ENCODE measurements at regions of chr11 and their contacts with region 1.

Region 1: DNA sequence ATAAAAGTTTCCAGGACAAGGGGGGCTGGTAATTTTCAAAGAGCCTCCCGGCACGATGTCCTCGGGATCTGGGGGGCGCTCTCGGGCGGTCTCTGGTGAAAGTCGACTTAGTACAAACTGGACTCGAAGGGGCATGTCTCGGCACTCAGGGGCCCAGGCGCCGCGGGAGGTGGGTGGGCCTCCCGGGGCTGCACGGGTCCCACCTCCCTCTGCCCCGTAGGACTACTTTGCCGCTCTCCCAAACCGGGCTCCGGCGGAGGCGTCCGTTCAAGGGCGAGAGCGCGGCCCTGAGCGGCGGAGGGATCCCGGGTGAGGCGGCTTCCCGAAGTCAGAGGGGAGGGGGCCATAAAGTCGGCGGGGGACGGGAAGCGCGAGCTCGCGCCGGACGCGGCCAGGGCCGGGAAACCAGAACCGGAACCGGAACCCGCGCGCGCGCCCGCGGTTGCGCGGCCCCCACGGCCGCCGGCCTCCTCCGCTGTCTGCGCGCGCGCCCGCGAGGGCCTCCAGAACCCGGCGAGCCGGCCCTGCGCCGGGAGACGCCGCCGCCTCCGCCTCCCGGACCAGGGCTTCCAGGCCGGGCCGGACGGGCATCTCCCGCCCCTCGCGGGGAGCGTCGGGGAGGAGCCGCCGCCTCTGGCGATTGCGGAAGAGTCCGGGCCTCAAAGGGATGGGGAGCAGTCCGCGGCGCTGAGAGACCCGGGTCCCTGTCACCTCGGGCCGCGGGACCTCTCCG is at the start of gene ARHGEF12:
- DNase-seq: peak; percentile 90
- H3K4me3 ChIP-seq: peak within 1 kb of the TSS; percentile 61
- CTCF ChIP-seq: peak; percentile 43

Region 2: GRCh38 chr11:120147092-120147949 is 188.8 kb before region 1 on chr11:
- CTCF ChIA-PET with region 1: no interaction called
- POLR2A ChIA-PET with region 1: no interaction called
- DNase-seq: no peak
- H3K4me3 ChIP-seq: no peak overlapping the region
- CTCF ChIP-seq: no peak

Region 3: GRCh38 chr11:120346233-120346632 is 10.2 kb after region 1 on chr11:
- CTCF ChIA-PET with region 1: interaction called, 15 read pairs
- POLR2A ChIA-PET with region 1: interaction called, 3 read pairs
- DNase-seq: no peak
- H3K4me3 ChIP-seq: no peak overlapping the region
- CTCF ChIP-seq: no peak

Region 4: DNA sequence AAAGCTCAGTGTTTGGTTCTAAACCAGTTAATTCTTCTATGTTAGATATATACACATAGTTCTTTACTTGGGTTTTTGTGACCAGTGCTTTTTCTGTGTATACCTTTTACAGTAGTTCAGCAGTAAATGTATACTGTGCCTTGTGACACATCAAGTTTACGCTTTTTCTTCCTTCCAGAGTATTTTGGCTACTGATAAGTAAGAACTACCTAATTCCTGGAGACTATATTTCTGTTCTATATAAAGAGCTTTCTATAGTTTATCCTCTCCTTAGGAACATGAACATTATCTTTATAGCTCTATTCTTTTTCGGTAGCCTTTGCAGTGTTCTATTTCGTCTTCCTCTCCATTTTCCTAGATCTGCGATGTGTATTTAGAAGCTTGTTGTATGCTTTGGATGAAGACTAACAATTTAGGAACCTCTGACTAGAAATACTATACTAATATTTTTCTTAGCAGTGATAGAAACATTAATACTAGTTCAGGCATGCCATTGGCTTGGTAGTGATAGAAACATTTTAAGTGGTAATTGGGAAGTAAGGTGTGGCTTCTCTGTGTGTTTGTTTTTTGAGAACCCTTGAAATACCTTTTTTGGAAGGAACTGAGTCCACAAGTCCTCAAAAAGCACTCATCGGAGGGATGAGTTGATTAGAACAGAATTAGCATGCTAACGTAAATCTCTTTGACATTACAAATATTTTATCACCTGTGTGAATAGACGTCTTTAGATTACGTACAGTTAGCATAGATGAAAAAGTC is 74.7 kb after region 1 on chr11:
- CTCF ChIA-PET with region 1: interaction called, 16 read pairs
- POLR2A ChIA-PET with region 1: interaction called, 4 read pairs
- DNase-seq: no peak
- H3K4me3 ChIP-seq: no peak overlapping the region
- CTCF ChIP-seq: no peak

Region 5: GRCh38 chr11:120446802-120447201 is 110.7 kb after region 1 on chr11:
- CTCF ChIA-PET with region 1: interaction called, 12 read pairs
- POLR2A ChIA-PET with region 1: interaction called, 3 read pairs
- DNase-seq: no peak
- H3K4me3 ChIP-seq: no peak overlapping the region
- CTCF ChIP-seq: no peak

Region 6: GRCh38 chr11:120467627-120468026 is 131.6 kb after region 1 on chr11:
- CTCF ChIA-PET with region 1: interaction called, 12 read pairs
- POLR2A ChIA-PET with region 1: interaction called, 5 read pairs
- DNase-seq: no peak
- H3K4me3 ChIP-seq: no peak overlapping the region
- CTCF ChIP-seq: no peak

Region 7: GRCh38 chr11:120579611-120580031 is 243.5 kb after region 1 on chr11:
- CTCF ChIA-PET with region 1: no interaction called
- POLR2A ChIA-PET with region 1: no interaction called
- DNase-seq: no peak
- H3K4me3 ChIP-seq: no peak overlapping the region
- CTCF ChIP-seq: no peak

Measured in AG04449 (cell line).